ENCODE measurements at regions of chr1 and their contacts with region 1.

Region 1: GRCh38 chr1:111507411-111508201 is 4.2 kb upstream of the ADORA3 start:
- DNase-seq: peak; percentile 77 to 94
- H3K4me3 ChIP-seq: no peak overlapping the region
- CTCF ChIP-seq: no peak
- POLR2A ChIP-seq: no peak

Region 2: GRCh38 chr1:111441573-111442192 is 65.9 kb before region 1 on chr1:
- intact Hi-C with region 1: no loop called
- DNase-seq: no peak
- H3K4me3 ChIP-seq: no peak overlapping the region
- CTCF ChIP-seq: no peak
- POLR2A ChIP-seq: no peak

Region 3: DNA sequence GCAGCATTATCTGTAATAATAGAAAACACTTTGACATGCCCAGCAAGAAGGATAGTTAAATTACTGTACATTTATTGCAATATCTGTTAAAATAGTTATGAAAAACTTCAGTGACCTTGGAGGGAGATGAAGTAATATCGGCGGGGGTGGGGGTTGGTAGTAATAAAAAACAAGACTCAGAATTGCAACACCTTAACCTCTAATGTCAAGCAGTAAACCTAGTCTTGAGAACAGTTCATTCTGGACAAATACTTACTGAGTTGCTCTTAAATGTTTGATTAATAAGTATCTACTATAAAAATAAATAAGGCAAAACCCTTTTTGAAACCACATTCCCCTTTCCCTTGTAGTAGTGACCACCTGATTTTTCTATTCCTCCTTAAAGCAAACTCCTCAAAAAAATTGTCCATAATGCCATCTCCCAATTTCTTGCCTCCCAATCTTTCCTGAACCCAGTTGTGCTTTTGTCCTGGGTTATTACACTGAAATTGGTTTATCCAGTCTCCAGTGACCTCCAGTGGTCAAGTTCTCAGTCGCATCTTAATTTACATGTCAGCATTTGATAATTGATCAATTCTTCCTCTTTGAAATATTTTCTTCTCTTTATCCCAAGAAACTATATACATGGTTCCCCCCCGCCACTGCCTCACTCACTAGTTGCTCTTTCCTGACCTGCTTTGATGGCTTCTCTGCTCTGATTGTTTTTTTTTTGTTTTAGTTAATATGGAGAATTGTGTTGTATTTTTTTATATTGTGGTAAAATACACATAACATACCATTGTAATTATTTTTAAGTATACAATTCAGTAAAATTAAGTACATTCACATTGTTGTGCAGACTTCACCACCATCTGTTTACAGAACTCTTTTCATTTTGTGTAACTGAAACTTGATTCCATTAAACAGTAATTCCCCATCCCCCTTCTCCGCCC is 148.7 kb after region 1 on chr1:
- intact Hi-C with region 1: loop called (anchors 10 kb)
- DNase-seq: peak in 1 of 2 donors; percentile 32
- H3K4me3 ChIP-seq: no peak overlapping the region
- CTCF ChIP-seq: no peak
- POLR2A ChIP-seq: no peak

Measured in lower leg skin (tissue), 4 donors.